ENCODE measurements at regions of chr4 and their contacts with region 1.

Region 1: DNA sequence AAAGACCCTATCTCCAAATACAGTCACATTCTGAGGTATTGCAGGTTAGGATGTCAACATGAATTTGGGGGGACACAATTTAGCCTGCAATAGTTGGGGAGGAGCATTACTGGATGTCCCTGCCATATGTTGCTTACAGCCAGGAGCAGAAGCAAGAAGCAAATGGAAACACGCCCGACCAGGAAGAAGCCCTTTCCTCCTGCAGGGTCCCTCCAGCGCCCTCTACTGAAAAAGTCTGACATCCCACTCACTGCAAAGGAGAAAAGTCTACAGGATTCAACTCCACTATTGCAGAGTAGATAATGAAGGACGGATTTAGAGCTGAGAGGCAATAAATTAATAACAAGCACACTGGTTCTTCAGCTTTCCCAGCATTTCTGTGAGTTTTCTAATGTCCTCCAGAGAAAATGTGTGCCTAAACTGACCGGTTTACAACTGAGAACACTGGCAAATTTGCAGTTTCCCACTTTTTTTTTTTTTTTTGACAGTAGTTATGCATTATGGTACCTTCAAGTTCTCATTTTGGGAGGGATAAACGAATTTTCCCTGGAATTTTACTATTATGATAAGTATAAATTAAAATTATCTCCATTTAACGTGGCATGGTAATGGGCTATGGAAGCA is 31.7 kb downstream of the COQ2 start:
- DNase-seq: peak; percentile 78 to 81 (median 80)
- H3K4me3 ChIP-seq: no peak overlapping the region
- H3K4me3 Mint-ChIP-seq: peak overlapping the region in 4 of 8 donors; percentile 39 to 50 (median 44)
- H3K27ac ChIP-seq: no peak overlapping the region
- H3K27ac Mint-ChIP-seq: peak overlapping the region in 6 of 7 donors; percentile 41 to 78 (median 72)
- H3K4me1 ChIP-seq: peaks cover 23% of the 10 kb centered on the region
- H3K4me1 Mint-ChIP-seq: peaks cover 13 to 29% (median 16%) of the 10 kb centered on the region in 4 donors
- H3K27me3 ChIP-seq: no peaks in the 10 kb centered on the region
- H3K27me3 Mint-ChIP-seq: no peaks in the 10 kb centered on the region

Region 2: GRCh38 chr4:83054928-83055327 is 198.0 kb before region 1 on chr4:
- CTCF ChIA-PET with region 1: interaction called, 12 read pairs
- POLR2A ChIA-PET with region 1: no interaction called
- intact Hi-C with region 1: no loop called
- DNase-seq: peak in 4 of 5 donors; percentile 13 to 25 (median 19)
- H3K4me3 ChIP-seq: no peak overlapping the region
- H3K4me3 Mint-ChIP-seq: no peak overlapping the region
- H3K27ac ChIP-seq: no peak overlapping the region
- H3K27ac Mint-ChIP-seq: no peak overlapping the region
- H3K4me1 ChIP-seq: no peaks in the 10 kb centered on the region
- H3K4me1 Mint-ChIP-seq: peaks cover 0 to 3% (median 0%) of the 10 kb centered on the region in 4 donors
- H3K27me3 ChIP-seq: no peaks in the 10 kb centered on the region
- H3K27me3 Mint-ChIP-seq: no peaks in the 10 kb centered on the region

Region 3: GRCh38 chr4:83083925-83084475 is 168.9 kb before region 1 on chr4:
- CTCF ChIA-PET with region 1: interaction called, 37 read pairs
- POLR2A ChIA-PET with region 1: interaction called, 5 read pairs
- intact Hi-C with region 1: loop called (anchors 1 kb)
- DNase-seq: peak; percentile 75 to 83 (median 78)
- H3K4me3 ChIP-seq: no peak overlapping the region
- H3K4me3 Mint-ChIP-seq: peak overlapping the region in 7 of 8 donors; percentile 43 to 73 (median 73)
- H3K27ac ChIP-seq: peak overlapping the region; percentile 45
- H3K27ac Mint-ChIP-seq: peak overlapping the region; percentile 77 to 97 (median 92)
- H3K4me1 ChIP-seq: peaks cover 30% of the 10 kb centered on the region
- H3K4me1 Mint-ChIP-seq: peaks cover 27 to 39% (median 34%) of the 10 kb centered on the region in 4 donors
- H3K27me3 ChIP-seq: no peaks in the 10 kb centered on the region
- H3K27me3 Mint-ChIP-seq: no peaks in the 10 kb centered on the region

Region 4: DNA sequence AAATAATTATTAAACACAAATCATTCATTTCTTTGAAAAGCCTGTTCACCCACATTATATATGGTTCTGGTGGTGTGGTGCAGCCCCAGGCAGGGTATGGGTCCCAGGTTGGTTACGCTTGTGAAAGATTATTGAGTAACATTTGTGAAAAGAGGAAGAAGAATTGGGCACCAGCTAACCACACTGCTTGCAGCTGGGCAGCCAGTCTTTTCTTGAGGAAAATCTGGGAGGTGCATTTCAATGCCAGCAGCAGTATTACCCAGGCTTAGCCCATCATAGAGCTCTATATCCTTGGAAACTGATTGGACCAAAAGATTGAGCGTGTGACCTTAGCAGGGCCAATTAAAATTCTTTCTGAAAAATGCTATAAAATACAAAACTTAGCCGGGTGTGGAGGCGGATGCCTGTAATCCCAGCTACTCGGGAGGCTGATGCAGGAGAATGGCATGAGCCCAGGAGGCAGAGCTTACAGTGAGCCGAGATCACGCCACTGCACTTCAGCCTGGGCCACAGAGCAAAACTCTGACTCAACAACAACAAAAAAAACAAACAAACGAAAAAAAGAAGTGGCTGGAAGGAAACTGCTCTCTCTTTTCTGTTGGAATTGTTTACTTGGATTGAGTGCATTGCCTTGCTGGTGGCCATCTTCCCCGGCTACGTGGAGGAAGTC is 128.6 kb before region 1 on chr4:
- CTCF ChIA-PET with region 1: interaction called, 26 read pairs
- POLR2A ChIA-PET with region 1: no interaction called
- intact Hi-C with region 1: no loop called
- DNase-seq: no peak
- H3K4me3 ChIP-seq: no peak overlapping the region
- H3K4me3 Mint-ChIP-seq: peak overlapping the region in 2 of 8 donors; percentile 15 to 25
- H3K27ac ChIP-seq: no peak overlapping the region
- H3K27ac Mint-ChIP-seq: peak overlapping the region in 2 of 7 donors; percentile 17 to 31
- H3K4me1 ChIP-seq: peaks cover 12% of the 10 kb centered on the region
- H3K4me1 Mint-ChIP-seq: peaks cover 8 to 17% (median 11%) of the 10 kb centered on the region in 4 donors
- H3K27me3 ChIP-seq: no peaks in the 10 kb centered on the region
- H3K27me3 Mint-ChIP-seq: no peaks in the 10 kb centered on the region

Region 5: GRCh38 chr4:83217721-83218522 is 35.0 kb before region 1 on chr4:
- CTCF ChIA-PET with region 1: interaction called, 38 read pairs
- POLR2A ChIA-PET with region 1: interaction called, 20 read pairs
- intact Hi-C with region 1: loop called (anchors 1 kb)
- DNase-seq: peak; percentile 82 to 91 (median 86)
- H3K4me3 ChIP-seq: peak overlapping the region in 1 of 2 donors; percentile 9
- H3K4me3 Mint-ChIP-seq: peak overlapping the region; percentile 55 to 77 (median 70)
- H3K27ac ChIP-seq: peak overlapping the region; percentile 64
- H3K27ac Mint-ChIP-seq: peak overlapping the region; percentile 77 to 94 (median 91)
- H3K4me1 ChIP-seq: peaks cover 85% of the 10 kb centered on the region
- H3K4me1 Mint-ChIP-seq: peaks cover 58 to 85% (median 71%) of the 10 kb centered on the region in 4 donors
- H3K27me3 ChIP-seq: no peaks in the 10 kb centered on the region
- H3K27me3 Mint-ChIP-seq: no peaks in the 10 kb centered on the region

Measured in CD4-positive, alpha-beta memory T cell (primary cell).